ENCODE measurements at regions of chr3 and their contacts with region 1.

Region 1: GRCh38 chr3:141105828-141106628 is 54.9 kb downstream of the SPSB4 start:
- DNase-seq: peak in 1 of 2 donors; percentile 74
- ATAC-seq: peak; percentile 67
- H3K4me3 ChIP-seq: no peak overlapping the region
- H3K27ac ChIP-seq: no peak overlapping the region
- H3K4me1 ChIP-seq: no peaks in the 10 kb centered on the region
- H3K27me3 ChIP-seq: no peaks in the 10 kb centered on the region

Region 2: DNA sequence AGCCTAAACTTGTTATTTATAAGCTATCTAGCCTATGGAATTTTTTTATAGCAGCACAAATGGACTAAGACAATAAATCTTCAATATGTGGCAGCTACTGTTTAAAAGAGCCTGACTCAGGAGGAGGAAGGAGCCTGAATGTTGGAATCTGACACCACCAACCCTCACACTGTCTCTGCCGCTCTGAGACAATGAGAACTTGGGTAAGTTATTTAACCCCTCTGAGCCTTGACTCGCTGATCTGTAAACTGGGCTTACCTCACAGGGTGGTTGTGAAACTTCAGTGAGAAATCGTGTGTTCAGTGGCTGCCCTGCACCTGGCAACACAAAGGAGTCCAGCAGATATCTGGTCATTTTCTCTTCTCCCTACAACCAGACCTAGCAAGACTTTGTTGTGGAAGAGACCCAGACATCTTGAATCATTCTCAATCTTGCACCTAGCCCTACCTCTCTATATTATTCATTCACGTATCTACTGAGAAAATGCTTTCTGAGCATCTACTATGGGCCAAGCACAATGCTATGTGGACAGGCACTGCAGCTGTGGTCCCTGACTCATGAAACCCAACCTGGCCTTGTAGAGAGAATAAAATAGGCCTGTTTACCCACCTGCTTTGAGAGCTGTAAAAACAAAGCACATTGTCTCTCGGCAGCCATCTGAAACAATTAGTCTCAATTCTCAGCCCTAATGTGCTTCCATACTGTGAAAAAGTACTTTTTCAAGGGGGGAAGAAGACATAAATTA is 246.3 kb before region 1 on chr3:
- intact Hi-C with region 1: no loop called
- DNase-seq: no peak
- ATAC-seq: no peak
- H3K4me3 ChIP-seq: no peak overlapping the region
- H3K27ac ChIP-seq: no peak overlapping the region
- H3K4me1 ChIP-seq: no peaks in the 10 kb centered on the region
- H3K27me3 ChIP-seq: no peaks in the 10 kb centered on the region

Region 3: DNA sequence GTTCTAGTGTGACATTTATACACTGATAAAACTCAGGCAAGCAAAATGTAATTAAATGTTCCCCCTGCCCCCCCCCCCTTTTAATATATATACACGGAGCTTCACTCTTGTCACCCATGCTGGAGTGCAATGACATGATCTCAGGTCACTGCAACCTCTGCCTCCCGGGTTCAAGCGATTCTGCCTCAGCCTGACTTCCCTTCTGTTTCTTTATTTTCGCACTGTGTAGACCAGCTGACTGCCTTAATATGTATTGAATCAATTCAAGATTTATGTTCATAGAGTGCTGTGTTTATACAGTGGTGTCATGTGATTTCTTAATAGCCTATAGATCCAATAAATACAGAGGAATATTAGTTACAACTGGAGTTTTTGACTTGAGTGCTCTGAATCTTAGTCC is 125.4 kb before region 1 on chr3:
- intact Hi-C with region 1: no loop called
- DNase-seq: no peak
- ATAC-seq: no peak
- H3K4me3 ChIP-seq: no peak overlapping the region
- H3K27ac ChIP-seq: no peak overlapping the region
- H3K4me1 ChIP-seq: no peaks in the 10 kb centered on the region
- H3K27me3 ChIP-seq: no peaks in the 10 kb centered on the region

Region 4: DNA sequence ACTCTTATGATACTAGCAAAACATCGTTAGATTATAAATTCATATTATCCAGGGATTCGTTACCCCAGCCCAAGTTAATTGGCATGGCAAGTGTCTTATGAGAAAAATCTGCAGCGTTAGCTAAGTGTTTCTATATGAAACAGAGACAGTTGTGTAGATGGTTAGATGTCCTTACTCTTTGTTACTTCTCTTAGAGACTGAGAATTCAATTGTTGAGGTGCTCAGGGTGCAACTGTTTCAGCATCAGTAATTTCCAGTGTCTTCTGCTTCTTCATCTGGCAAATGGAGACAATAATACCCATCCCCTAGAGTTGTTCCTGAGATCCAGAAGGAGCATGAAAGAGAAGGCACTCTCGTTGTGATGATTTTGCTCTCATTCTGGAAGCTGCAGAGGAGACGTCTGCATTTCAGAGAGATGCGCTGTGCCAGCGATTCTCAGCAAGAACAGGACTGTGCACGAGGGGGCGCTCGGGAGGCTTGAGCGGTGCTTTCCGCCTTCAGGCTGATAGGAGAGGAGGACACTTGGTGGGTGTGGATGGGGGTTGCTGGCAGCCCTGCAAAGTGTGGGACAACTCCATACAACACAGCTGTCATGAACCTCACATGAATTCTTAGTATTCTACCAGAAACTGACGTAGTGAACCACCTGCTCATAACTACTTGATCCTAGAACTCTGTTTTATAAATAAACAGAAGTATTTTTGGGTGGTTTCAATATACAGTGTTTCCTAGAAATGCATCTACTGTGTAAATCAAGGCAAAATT is 94.6 kb before region 1 on chr3:
- intact Hi-C with region 1: loop called (anchors 1 to 5 kb)
- DNase-seq: peak; percentile 85 to 94
- ATAC-seq: peak; percentile 83
- H3K4me3 ChIP-seq: no peak overlapping the region
- H3K27ac ChIP-seq: no peak overlapping the region
- H3K4me1 ChIP-seq: no peaks in the 10 kb centered on the region
- H3K27me3 ChIP-seq: no peaks in the 10 kb centered on the region

Region 5: GRCh38 chr3:141050576-141051442 is 55.2 kb before region 1 on chr3 and contains the start of gene SPSB4:
- intact Hi-C with region 1: loop called in 1 of 2 experiments (anchors 5 kb)
- DNase-seq: peak; percentile 62 to 91
- ATAC-seq: peak; percentile 85
- H3K4me3 ChIP-seq: peak within 1 kb of the TSS; percentile 49 to 74
- H3K27ac ChIP-seq: no peak within 1 kb of the TSS
- H3K4me1 ChIP-seq: no peaks in the 10 kb centered on the region
- H3K27me3 ChIP-seq: no peaks in the 10 kb centered on the region
- total RNA-seq, gene SPSB4: 1.0 to 2.0 TPM

Region 6: GRCh38 chr3:141575879-141576743 is 470.1 kb after region 1 on chr3:
- intact Hi-C with region 1: no loop called
- DNase-seq: no peak
- ATAC-seq: no peak
- H3K4me3 ChIP-seq: peak overlapping the region in 1 of 2 donors; percentile 34
- H3K27ac ChIP-seq: no peak overlapping the region
- H3K4me1 ChIP-seq: no peaks in the 10 kb centered on the region
- H3K27me3 ChIP-seq: no peaks in the 10 kb centered on the region